Heart right ventricle (tissue), 16 donors: ENCODE measurements at regions of chr10 and their contacts with region 1.

Region 1: DNA sequence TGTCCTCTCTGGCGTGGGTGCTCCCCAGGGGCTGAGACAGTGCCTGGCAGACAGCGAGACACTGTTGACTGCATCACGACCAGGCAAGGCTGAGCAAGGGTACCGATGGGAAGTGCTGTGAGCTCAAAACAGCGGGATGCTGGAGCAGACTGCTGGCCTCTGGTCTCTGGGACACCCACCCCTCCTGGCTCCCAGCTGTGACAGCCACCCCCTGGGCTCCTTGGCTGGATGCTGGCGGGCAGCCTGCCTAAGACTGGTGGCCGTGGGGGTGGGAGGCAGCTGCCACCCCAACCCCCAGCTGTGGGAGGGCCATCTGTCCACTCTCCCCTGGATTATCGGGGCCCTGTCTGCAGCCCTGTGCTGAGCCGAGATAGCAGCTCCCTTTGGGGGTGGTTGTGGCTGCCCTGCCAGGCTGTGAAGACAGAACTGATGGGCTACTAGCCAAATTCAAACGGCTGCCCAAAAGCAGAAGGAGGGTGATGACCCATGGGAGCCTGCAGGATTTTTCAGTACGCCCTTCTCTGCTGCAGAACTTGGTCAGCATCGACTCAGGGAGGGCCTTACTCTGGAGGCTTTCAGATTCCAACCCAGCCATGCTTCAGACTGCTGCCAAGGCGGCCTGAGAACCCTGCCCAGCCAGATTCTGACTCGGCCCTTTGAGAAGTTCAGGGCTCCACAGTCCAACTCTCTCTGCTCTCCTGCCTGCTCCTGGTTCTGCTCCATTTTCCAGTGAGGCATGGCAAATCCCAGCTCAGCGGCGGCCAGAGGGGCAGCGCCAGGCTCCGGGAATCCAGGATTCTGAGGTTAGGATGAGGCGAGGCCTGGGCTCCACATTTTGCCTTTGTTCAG is 125.3 kb downstream of the NEURL1 start:
- DNase-seq: peak; percentile 74 to 75
- ATAC-seq: peak; percentile 37 to 77 (median 44)
- H3K4me3 ChIP-seq: no peak overlapping the region
- H3K27ac ChIP-seq: peak overlapping the region in 9 of 10 donors; percentile 34 to 85 (median 72)
- H3K4me1 ChIP-seq: peaks cover 50 to 95% (median 87%) of the 10 kb centered on the region in 9 donors
- H3K27me3 ChIP-seq: no peaks in the 10 kb centered on the region
- CTCF ChIP-seq: no peak

Region 2: GRCh38 chr10:103382769-103383168 is 236.0 kb before region 1 on chr10:
- intact Hi-C with region 1: no loop called
- DNase-seq: no peak
- ATAC-seq: no peak
- H3K4me3 ChIP-seq: no peak overlapping the region
- H3K27ac ChIP-seq: no peak overlapping the region
- H3K4me1 ChIP-seq: no peaks in the 10 kb centered on the region
- H3K27me3 ChIP-seq: no peaks in the 10 kb centered on the region
- CTCF ChIP-seq: no peak

Region 3: DNA sequence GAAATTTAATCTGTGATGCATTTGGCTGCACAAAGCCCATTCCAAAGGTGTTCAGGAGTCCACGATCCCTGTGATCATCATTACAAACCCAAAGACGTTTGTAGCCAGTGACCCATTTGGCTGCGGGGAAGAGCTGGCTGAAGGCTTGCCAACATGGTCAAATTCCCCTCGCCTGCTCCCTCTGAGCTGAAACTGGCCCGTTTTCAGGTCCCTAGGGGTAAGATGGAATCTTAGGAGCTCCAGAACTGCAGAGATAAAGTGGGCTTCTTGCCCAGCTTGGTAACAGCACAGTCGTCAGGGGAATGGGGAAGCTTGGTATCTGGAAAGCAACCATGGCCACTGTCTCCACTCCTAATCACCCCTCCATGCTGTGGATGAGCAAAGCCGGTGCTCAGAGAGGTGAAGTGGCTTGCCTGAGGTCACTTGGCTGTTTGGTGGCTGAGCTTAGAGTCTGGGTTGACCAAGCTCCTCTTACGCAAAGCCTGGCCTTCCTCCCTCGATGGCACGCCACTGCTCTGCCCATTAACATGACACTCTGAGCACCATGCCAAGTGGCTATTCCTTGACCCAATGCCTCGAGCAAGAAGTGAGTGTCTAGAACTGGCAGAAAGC is 30.2 kb after region 1 on chr10:
- intact Hi-C with region 1: loop called in 3 of 10 experiments (anchors 5 kb)
- DNase-seq: no peak
- ATAC-seq: peak in 5 of 8 donors; percentile 3 to 66 (median 16)
- H3K4me3 ChIP-seq: no peak overlapping the region
- H3K27ac ChIP-seq: peak overlapping the region in 4 of 10 donors; percentile 13 to 54 (median 30)
- H3K4me1 ChIP-seq: peaks cover 27 to 93% (median 80%) of the 10 kb centered on the region in 9 donors
- H3K27me3 ChIP-seq: no peaks in the 10 kb centered on the region
- CTCF ChIP-seq: no peak

Region 4: GRCh38 chr10:103659674-103660363 is 41.0 kb after region 1 on chr10:
- intact Hi-C with region 1: loop called in 6 of 10 experiments (anchors 5 to 10 kb)
- DNase-seq: peak; percentile 49 to 81
- ATAC-seq: peak; percentile 76 to 88 (median 84)
- H3K4me3 ChIP-seq: peak overlapping the region; percentile 8 to 81 (median 65)
- H3K27ac ChIP-seq: peak overlapping the region; percentile 76 to 95 (median 90)
- H3K4me1 ChIP-seq: peaks cover 9 to 59% (median 47%) of the 10 kb centered on the region in 9 donors
- H3K27me3 ChIP-seq: no peaks in the 10 kb centered on the region
- CTCF ChIP-seq: no peak

Region 5: DNA sequence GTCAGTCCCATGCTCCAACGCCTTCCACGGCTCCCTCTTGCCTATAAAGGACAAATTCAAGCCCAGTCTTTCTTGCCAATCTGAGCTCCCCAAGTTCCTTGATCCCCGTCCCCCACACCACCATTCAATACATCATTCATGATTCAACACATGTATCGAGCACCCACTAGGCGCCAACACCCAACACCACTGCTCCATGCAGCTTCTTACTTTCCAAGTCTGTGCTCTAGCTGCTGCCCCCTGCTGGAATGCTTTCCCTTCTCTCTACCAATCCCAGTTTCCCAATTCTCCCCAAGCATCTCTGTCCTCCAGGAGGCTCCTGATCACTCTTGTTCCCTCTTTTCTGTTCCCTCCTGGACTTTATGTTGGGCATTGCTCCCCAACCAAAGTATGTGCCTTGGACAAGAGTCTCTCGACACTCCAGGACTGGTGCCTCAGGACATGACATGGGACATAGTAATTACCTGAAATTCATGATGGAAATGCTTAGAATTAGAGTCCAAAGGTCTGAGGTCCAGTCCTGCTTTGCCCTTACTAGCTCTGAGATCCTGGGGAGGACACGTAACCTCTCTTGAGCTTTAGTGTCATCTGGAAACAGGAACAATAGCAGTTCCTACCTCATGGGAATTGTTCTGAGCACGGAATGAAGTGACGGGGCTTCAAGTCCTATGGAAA is 47.4 kb after region 1 on chr10:
- intact Hi-C with region 1: loop called in 6 of 10 experiments (anchors 5 to 10 kb)
- DNase-seq: no peak
- ATAC-seq: no peak
- H3K4me3 ChIP-seq: no peak overlapping the region
- H3K27ac ChIP-seq: peak overlapping the region in 9 of 10 donors; percentile 23 to 83 (median 72)
- H3K4me1 ChIP-seq: peaks cover 26 to 90% (median 70%) of the 10 kb centered on the region in 9 donors
- H3K27me3 ChIP-seq: no peaks in the 10 kb centered on the region
- CTCF ChIP-seq: peak in 8 of 9 donors; percentile 11 to 54 (median 46)

Region 6: GRCh38 chr10:103678178-103678526 is 59.4 kb after region 1 on chr10:
- intact Hi-C with region 1: loop called in 1 of 10 experiments (anchors 5 kb)
- DNase-seq: peak; percentile 83 to 89
- ATAC-seq: peak; percentile 81 to 93 (median 88)
- H3K4me3 ChIP-seq: peak overlapping the region in 8 of 10 donors; percentile 11 to 46 (median 35)
- H3K27ac ChIP-seq: peak overlapping the region in 9 of 10 donors; percentile 57 to 90 (median 82)
- H3K4me1 ChIP-seq: peaks cover 0 to 50% (median 28%) of the 10 kb centered on the region in 9 donors
- H3K27me3 ChIP-seq: no peaks in the 10 kb centered on the region
- CTCF ChIP-seq: no peak